ENCODE measurements at regions of chr5 and their contacts with region 1.

Region 1: DNA sequence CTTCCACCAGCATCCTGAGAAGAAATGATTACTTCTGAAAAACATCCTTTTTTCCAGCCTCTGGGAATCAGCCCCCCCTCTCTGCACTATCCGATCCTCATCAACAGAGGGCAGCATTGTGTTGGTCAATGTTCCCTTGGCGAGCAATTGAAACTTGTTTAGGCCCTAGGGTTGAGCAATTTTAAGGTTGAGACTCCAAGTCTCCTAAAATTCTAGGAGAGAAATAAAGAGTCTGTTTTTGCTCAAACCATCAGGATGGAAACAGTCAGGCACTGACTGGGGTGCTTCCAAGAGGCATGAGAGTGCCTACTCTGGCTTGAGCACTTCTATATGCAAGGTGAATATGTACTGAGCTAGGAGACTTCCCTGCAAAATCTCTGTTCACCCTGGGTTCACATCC is 12.4 kb upstream of the CYFIP2 start:
- DNase-seq: no peak
- H3K4me3 ChIP-seq: no peak overlapping the region
- CTCF ChIP-seq: peak; percentile 86

Region 2: GRCh38 chr5:157148734-157149615 is 104.6 kb before region 1 on chr5:
- CTCF ChIA-PET with region 1: interaction called, 21 read pairs
- POLR2A ChIA-PET with region 1: no interaction called
- DNase-seq: no peak
- H3K4me3 ChIP-seq: no peak overlapping the region
- CTCF ChIP-seq: peak; percentile 76

Region 3: DNA sequence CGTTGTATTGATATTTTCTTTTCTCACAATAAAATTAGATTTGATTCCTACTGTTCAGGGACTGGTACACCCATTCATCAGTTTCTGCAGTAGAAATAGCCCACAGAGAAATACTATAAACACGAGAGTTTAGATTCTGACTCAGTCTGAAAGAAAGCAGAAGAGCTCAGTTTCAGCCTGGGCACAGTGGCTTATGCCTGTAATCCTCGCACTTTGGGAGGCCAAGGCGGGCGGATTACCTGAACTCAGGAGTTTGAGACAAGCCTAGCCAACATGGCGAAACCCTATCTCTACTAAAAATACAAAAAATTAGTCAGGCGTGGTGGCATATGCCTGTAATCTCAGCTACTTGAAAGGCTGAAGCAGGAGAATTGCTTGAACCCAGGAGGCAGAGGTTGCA is 64.3 kb before region 1 on chr5:
- CTCF ChIA-PET with region 1: no interaction called
- POLR2A ChIA-PET with region 1: no interaction called
- DNase-seq: no peak
- H3K4me3 ChIP-seq: no peak overlapping the region
- CTCF ChIP-seq: no peak

Region 4: DNA sequence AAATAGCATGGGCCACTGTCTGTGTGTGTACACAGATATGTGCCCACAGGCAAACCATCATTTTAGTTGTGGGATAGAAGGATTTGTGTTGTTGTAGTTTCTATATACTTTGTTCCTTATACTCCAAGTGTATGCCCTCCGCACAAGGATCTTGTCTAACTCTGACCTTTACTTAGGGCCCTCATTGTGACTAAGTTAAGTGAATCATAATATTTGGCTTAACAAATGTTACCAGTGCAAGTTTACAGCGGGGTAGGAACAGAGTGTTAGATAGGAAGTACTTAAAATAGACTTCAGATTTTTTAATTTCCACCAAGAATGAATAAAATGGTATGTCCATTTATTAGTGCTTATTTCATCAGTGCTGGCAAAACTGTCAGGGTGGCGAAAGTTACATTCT is 17.1 kb before region 1 on chr5:
- CTCF ChIA-PET with region 1: interaction called, 10 read pairs
- POLR2A ChIA-PET with region 1: no interaction called
- DNase-seq: no peak
- H3K4me3 ChIP-seq: no peak overlapping the region
- CTCF ChIP-seq: no peak

Region 5: GRCh38 chr5:157271740-157272271 is 18.3 kb after region 1 on chr5:
- CTCF ChIA-PET with region 1: interaction called, 74 read pairs
- POLR2A ChIA-PET with region 1: no interaction called
- DNase-seq: no peak
- H3K4me3 ChIP-seq: no peak overlapping the region
- CTCF ChIP-seq: no peak

Region 6: DNA sequence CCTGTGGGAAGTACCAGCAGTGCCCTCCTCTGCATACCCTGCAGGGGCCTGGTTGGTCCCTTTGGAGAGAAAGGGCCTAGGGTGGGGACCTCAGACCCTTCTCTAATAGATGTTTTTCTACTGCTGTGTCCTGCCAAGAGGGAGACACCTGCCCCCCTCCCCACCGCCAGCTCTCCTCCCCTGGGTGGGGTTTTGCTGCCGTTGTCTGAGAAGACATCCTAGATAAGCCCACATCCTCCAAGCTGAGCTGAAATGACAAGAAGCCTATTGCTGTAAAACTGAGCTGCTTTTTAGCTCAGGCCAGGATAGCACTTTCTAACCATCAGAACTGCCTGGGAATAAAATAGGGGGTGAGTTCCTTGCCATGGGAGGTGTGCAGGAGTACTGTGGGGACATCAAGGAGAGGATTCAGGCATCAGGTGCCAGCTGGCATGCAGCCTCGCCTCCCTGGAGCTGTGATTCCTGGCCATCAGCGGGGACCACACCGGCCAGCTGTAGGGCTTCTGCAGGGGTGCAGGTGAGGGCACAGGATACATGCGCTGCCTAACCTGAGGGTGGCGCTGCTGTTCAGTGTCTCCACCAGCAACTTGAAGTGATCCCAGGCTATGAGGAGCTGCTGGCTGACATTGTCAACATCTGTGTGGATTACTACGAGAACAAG is 50.2 kb after region 1 on chr5:
- CTCF ChIA-PET with region 1: interaction called, 88 read pairs
- POLR2A ChIA-PET with region 1: interaction called, 3 read pairs
- DNase-seq: no peak
- H3K4me3 ChIP-seq: no peak overlapping the region
- CTCF ChIP-seq: no peak

Region 7: GRCh38 chr5:157328277-157328912 is 74.8 kb after region 1 on chr5:
- CTCF ChIA-PET with region 1: interaction called, 77 read pairs
- POLR2A ChIA-PET with region 1: no interaction called
- DNase-seq: peak; percentile 38
- H3K4me3 ChIP-seq: peak overlapping the region; percentile 35
- CTCF ChIP-seq: peak; percentile 93

Region 8: DNA sequence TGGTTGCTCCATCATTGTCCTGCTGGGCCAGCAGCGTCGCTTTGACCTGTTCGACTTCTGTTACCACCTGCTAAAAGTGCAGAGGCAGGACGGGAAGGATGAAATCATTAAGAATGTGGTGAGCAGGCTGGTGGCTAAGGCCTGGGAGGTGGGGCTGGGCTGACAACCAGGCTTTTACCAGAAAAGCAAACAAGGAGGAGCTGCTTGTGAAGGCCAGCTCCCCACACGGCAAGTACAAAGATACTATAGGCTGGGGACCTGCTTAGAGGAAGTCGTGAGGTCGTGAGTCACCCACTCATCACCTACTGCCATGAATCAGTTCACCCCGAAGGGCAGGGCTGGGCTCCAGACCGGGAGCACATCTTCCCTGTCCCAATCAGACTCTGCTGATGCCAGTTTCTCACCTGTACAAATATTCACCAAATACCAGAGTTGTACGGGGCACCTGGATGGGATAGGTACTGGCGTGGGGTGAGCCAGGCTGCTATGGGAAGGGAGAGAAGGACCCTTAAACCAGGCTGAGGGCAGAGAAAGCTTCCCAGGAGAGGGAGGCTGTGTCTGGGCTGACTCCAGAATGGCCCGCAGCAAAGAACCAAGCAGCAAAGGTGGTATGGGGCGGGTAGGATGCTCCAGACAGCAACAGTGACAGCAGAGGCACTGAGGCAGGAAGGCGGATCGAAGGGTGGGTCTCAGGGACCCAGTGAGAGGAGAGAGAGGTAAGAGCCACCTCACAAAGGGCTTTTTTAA is 137.2 kb after region 1 on chr5:
- CTCF ChIA-PET with region 1: no interaction called
- POLR2A ChIA-PET with region 1: no interaction called
- DNase-seq: peak; percentile 82
- H3K4me3 ChIP-seq: no peak overlapping the region
- CTCF ChIP-seq: no peak

Measured in AG04449 (cell line).